PC-9 (cell line): ENCODE measurements at regions of chr1 and their contacts with region 1.

Region 1: DNA sequence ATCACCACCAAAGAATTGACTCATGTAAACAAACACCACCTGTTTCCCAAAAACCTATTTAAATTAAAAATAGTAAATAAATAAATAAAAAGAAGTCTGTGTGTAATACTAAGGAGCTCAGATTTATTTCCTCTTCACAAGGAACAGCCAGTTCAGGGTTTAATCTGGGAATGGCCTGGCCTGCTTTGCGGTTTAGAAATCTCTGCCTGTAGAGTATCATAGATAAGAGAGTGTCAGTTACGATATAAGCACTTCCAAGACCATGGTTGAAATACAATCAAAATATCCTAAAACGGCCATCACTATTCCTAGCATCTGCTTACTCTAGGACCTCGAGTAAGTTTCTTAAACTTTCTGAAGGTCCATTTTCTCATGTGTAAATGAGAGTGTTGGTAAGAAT is 274.4 kb downstream of the PLPP3 start:
- DNase-seq: no peak
- H3K4me3 ChIP-seq: no peak overlapping the region
- H3K27ac ChIP-seq: no peak overlapping the region
- H3K4me1 ChIP-seq: peaks cover 9% of the 10 kb centered on the region; the same call in 1 of the 2 replicates
- H3K27me3 ChIP-seq: no peaks in the 10 kb centered on the region
- CTCF ChIP-seq: no peak

Region 2: DNA sequence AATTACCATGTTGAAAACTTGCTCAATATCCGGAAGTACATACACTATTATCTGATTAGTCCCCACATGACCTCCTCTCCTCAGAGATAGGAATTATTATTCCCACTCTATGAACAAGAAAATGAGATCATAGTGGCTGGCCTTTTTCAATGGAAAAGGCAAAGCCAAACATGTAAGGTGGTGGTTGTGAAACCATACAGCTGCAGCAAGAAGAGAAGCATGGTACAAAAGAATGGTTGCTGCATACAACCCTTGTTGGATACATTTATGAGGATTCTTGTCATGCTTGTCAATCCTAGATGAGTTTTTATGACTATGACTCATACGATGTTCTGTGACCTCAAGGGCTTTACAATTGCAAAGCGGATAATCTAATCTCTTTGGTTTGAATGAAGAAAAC is 240.3 kb before region 1 on chr1:
- CTCF ChIA-PET with region 1: no interaction called
- POLR2A ChIA-PET with region 1: no interaction called
- intact Hi-C with region 1: no loop called
- DNase-seq: peak in 1 of 2 experiments; percentile 77
- H3K4me3 ChIP-seq: no peak overlapping the region
- H3K27ac ChIP-seq: no peak overlapping the region
- H3K4me1 ChIP-seq: peaks cover 15% of the 10 kb centered on the region
- H3K27me3 ChIP-seq: no peaks in the 10 kb centered on the region
- CTCF ChIP-seq: no peak

Region 3: GRCh38 chr1:56216218-56216617 is 88.8 kb before region 1 on chr1:
- CTCF ChIA-PET with region 1: no interaction called
- POLR2A ChIA-PET with region 1: no interaction called
- intact Hi-C with region 1: no loop called
- DNase-seq: no peak
- H3K4me3 ChIP-seq: no peak overlapping the region
- H3K27ac ChIP-seq: no peak overlapping the region
- H3K4me1 ChIP-seq: no peaks in the 10 kb centered on the region
- H3K27me3 ChIP-seq: no peaks in the 10 kb centered on the region
- CTCF ChIP-seq: no peak

Region 4: DNA sequence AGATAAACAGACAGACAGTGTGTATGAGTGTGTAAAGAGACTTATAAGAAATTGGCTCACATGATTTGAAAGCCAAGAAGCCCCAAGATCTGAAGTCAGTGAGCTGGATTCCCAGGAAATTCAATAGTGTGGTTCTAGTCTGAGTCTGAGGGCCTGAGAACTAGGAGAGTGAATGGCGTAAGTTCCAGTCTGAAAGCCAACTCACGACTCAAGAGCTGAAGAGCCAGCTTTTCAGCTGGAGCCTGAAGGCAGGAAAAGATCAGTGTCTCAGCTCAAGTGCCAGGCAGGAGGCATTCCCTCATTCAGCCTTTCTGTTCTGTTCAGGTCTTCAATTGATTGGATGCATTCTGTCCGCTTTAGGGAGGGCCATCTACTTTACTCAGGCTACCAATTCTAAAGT is 17.2 kb after region 1 on chr1:
- CTCF ChIA-PET with region 1: no interaction called
- POLR2A ChIA-PET with region 1: no interaction called
- intact Hi-C with region 1: loop called (anchors 1 kb)
- DNase-seq: no peak
- H3K4me3 ChIP-seq: no peak overlapping the region
- H3K27ac ChIP-seq: no peak overlapping the region
- H3K4me1 ChIP-seq: peaks cover 9% of the 10 kb centered on the region
- H3K27me3 ChIP-seq: no peaks in the 10 kb centered on the region
- CTCF ChIP-seq: no peak

Region 5: DNA sequence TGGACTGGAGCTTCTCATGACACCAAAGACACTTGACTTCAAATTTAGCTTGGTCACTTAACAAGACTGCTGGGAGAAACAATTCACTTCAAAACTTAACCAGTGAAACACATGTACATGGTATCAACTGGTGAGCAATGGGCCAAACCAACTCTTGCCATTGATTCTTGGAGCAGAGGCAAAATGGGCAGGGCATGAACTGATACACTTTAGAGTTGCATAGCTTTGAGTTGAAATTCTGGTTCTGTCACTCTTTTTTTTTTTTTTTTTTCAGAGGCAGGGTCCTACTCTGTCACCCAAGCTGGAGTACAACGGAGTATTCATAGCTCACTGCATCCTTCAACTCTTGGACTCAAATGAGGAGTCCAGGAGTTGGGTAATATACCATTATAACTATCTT is 31.1 kb after region 1 on chr1:
- CTCF ChIA-PET with region 1: interaction called, 3 read pairs
- POLR2A ChIA-PET with region 1: interaction called, 14 read pairs
- intact Hi-C with region 1: no loop called
- DNase-seq: no peak
- H3K4me3 ChIP-seq: no peak overlapping the region
- H3K27ac ChIP-seq: no peak overlapping the region
- H3K4me1 ChIP-seq: peaks cover 31% of the 10 kb centered on the region
- H3K27me3 ChIP-seq: no peaks in the 10 kb centered on the region
- CTCF ChIP-seq: no peak

Region 6: GRCh38 chr1:57860325-57860724 is 1555.3 kb after region 1 on chr1:
- CTCF ChIA-PET with region 1: interaction called, 10 read pairs
- POLR2A ChIA-PET with region 1: no interaction called
- intact Hi-C with region 1: no loop called
- DNase-seq: no peak
- H3K4me3 ChIP-seq: no peak overlapping the region
- H3K27ac ChIP-seq: no peak overlapping the region
- H3K4me1 ChIP-seq: no peaks in the 10 kb centered on the region
- H3K27me3 ChIP-seq: no peaks in the 10 kb centered on the region
- CTCF ChIP-seq: no peak